ENCODE measurements at regions of chr12 and their contacts with region 1.

Region 1: GRCh38 chr12:89352492-89353187 is at the start of gene DUSP6:
- DNase-seq: peak; percentile 97
- ATAC-seq: peak; percentile 79
- H3K4me3 Mint-ChIP-seq: peak within 1 kb of the TSS; percentile 98
- H3K27ac Mint-ChIP-seq: peak within 1 kb of the TSS; percentile 94
- H3K4me1 Mint-ChIP-seq: peaks cover 44% of the 10 kb centered on the region
- H3K27me3 Mint-ChIP-seq: no peaks in the 10 kb centered on the region
- total RNA-seq, gene DUSP6: 116 to 119 TPM

Region 2: DNA sequence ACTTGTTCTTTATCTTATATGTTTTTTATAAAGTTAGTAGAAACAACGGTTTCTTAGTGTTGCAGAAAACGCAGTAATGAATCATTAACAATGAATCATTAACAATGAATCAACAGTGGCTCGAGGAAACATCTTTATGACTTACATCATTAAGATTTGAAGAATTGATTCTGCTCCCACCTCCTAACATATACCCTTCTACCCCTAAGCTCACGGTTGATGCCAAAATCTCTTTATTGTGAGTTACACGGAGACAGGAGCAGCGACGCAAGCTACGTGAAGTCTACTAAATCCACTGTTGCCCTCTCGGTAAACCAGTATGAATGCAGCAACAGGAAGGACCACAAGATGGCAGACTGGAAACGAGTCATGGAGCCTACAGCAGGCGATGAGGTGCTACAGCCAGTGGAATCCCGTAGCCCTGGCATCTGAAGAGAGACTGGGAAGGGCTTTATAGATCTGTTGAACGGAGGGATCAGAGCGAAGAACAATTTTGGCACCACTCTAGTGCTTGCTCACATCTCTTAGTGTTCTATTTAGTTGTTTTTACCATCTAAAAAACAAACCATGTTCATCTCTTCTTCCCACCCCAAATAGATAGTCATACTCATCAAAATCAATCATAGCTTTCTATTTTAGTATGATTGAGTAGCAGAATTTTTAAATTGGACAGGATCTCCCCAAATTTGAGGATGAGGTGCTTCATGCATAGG is 333.1 kb before region 1 on chr12:
- CTCF ChIA-PET with region 1: interaction called, 53 read pairs
- POLR2A ChIA-PET with region 1: interaction called, 4 read pairs
- DNase-seq: peak; percentile 90
- ATAC-seq: peak; percentile 98
- H3K4me3 Mint-ChIP-seq: no peak overlapping the region
- H3K27ac Mint-ChIP-seq: no peak overlapping the region
- H3K4me1 Mint-ChIP-seq: peaks cover 40% of the 10 kb centered on the region
- H3K27me3 Mint-ChIP-seq: peaks cover 2% of the 10 kb centered on the region

Region 3: DNA sequence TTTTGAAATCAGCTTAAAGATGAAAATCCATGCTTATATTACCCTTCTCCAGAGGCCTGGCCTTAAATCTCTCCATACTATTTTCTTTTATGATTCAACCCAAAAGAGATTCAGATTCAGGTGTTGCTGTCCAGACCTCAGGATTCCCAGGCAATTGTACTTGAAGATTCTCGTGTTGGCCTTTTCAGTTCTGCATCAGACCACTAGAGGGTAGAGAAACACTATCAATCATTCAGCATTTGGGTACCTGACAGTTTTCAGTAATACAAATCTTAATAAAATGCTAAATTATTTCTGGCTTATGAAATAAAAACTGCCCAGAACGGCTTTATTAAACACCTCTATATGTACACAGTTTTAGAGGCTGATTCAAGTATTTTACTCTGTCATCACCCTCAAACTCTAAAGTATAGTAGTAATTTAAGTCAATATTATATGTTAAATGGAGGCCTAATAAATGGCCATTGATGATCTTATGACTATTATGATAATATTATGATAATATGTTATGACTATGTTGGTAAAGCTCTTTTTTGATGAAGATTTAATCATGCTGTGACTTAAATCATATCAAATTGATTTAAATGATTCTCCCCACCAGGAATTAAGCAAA is 301.5 kb before region 1 on chr12:
- CTCF ChIA-PET with region 1: interaction called, 13 read pairs
- POLR2A ChIA-PET with region 1: interaction called, 4 read pairs
- DNase-seq: peak; percentile 55
- ATAC-seq: peak; percentile 77
- H3K4me3 Mint-ChIP-seq: no peak overlapping the region
- H3K27ac Mint-ChIP-seq: no peak overlapping the region
- H3K4me1 Mint-ChIP-seq: peaks cover 32% of the 10 kb centered on the region
- H3K27me3 Mint-ChIP-seq: no peaks in the 10 kb centered on the region

Region 4: GRCh38 chr12:89225808-89226411 is 126.7 kb before region 1 on chr12:
- CTCF ChIA-PET with region 1: interaction called, 4 read pairs
- POLR2A ChIA-PET with region 1: interaction called, 19 read pairs
- DNase-seq: no peak
- ATAC-seq: peak; percentile 52
- H3K4me3 Mint-ChIP-seq: peak overlapping the region; percentile 45
- H3K27ac Mint-ChIP-seq: peak overlapping the region; percentile 89
- H3K4me1 Mint-ChIP-seq: peaks cover 79% of the 10 kb centered on the region
- H3K27me3 Mint-ChIP-seq: no peaks in the 10 kb centered on the region

Region 5: DNA sequence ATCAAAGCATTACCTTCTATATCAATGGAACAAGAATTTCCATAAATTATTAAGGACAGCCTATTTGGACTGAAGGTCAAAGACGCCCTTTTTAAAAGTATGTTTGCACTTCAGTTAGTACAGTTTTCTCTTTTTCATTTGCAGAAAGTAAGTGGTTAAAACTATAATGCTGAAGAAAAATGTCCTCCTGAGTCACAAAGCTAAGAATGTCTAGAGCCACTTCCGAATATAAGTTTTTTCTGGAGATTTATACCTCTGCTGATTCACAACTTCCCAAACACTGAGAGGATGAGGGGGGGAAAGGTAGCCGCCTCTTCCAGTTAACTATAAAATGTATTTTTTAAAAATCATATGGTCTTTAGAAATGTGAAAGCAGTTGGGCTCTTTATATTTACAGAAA is 85.2 kb before region 1 on chr12:
- CTCF ChIA-PET with region 1: no interaction called
- POLR2A ChIA-PET with region 1: no interaction called
- DNase-seq: no peak
- ATAC-seq: no peak
- H3K4me3 Mint-ChIP-seq: no peak overlapping the region
- H3K27ac Mint-ChIP-seq: no peak overlapping the region
- H3K4me1 Mint-ChIP-seq: no peaks in the 10 kb centered on the region
- H3K27me3 Mint-ChIP-seq: no peaks in the 10 kb centered on the region

Region 6: GRCh38 chr12:89427508-89428156 is 75.0 kb after region 1 on chr12:
- CTCF ChIA-PET with region 1: interaction called, 3 read pairs
- POLR2A ChIA-PET with region 1: interaction called, 27 read pairs
- DNase-seq: peak; percentile 33
- ATAC-seq: peak; percentile 78
- H3K4me3 Mint-ChIP-seq: peak overlapping the region; percentile 30
- H3K27ac Mint-ChIP-seq: peak overlapping the region; percentile 79
- H3K4me1 Mint-ChIP-seq: peaks cover 40% of the 10 kb centered on the region
- H3K27me3 Mint-ChIP-seq: no peaks in the 10 kb centered on the region

Region 7: GRCh38 chr12:89461649-89462612 is 109.3 kb after region 1 on chr12:
- CTCF ChIA-PET with region 1: interaction called, 39 read pairs
- POLR2A ChIA-PET with region 1: interaction called, 49 read pairs
- DNase-seq: no peak
- ATAC-seq: peak; percentile 87
- H3K4me3 Mint-ChIP-seq: peak overlapping the region; percentile 76
- H3K27ac Mint-ChIP-seq: peak overlapping the region; percentile 28
- H3K4me1 Mint-ChIP-seq: peaks cover 68% of the 10 kb centered on the region
- H3K27me3 Mint-ChIP-seq: no peaks in the 10 kb centered on the region

Region 8: DNA sequence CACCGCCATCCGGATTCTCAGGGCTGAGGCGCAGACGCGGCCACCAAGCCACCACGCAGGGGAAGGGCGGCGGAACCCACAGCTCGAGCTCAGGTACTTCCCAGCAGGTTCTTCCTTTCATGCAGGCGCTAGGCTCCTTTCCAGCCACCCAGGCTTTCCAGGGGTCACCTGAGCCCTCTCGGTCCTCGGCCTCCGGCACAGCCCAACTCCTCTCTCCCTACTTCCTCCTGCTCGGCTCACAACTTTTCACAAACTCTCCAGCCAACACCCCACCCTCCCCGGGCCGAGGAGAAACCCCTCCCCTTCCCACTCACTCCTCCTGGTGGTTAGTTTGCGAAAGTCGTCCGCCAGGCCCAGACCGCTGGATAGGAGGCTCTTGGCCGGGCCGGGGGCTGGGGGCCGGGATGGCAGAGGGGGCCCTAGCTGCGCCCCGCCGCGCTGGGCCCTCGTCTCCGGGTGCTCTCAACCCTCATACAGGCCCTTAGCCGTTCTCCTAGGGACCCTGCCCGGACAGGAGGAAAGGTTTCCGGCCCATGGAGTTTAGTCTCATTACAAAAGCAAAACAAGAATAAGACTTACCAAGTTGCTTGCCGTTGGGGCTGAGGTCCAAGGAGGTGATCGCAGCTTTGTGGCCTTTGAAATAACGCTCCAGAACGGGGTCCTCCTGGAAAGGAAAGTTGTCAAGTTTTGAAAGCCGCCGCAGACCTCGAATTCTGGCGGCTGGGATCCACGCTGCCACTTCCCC is 172.1 kb after region 1 on chr12 and contains the start of gene GALNT4:
- CTCF ChIA-PET with region 1: interaction called, 6 read pairs
- POLR2A ChIA-PET with region 1: interaction called, 13 read pairs
- DNase-seq: peak; percentile 86
- ATAC-seq: peak; percentile 78
- H3K4me3 Mint-ChIP-seq: peak within 1 kb of the TSS; percentile 89
- H3K27ac Mint-ChIP-seq: peak within 1 kb of the TSS; percentile 98
- H3K4me1 Mint-ChIP-seq: peaks cover 73% of the 10 kb centered on the region
- H3K27me3 Mint-ChIP-seq: no peaks in the 10 kb centered on the region
- total RNA-seq, gene GALNT4: 15.4 to 16.6 TPM